ENCODE measurements at regions of chr1 and their contacts with region 1.

Region 1: GRCh38 chr1:65687428-65688214 is 105.1 kb upstream of the PDE4B start:
- DNase-seq: no peak
- H3K4me3 ChIP-seq: no peak overlapping the region
- CTCF ChIP-seq: peak; percentile 84

Region 2: GRCh38 chr1:65066766-65067490 is 620.7 kb before region 1 on chr1:
- CTCF ChIA-PET with region 1: interaction called, 22 read pairs
- POLR2A ChIA-PET with region 1: no interaction called
- DNase-seq: no peak
- H3K4me3 ChIP-seq: peak overlapping the region; percentile 68
- CTCF ChIP-seq: no peak

Region 3: DNA sequence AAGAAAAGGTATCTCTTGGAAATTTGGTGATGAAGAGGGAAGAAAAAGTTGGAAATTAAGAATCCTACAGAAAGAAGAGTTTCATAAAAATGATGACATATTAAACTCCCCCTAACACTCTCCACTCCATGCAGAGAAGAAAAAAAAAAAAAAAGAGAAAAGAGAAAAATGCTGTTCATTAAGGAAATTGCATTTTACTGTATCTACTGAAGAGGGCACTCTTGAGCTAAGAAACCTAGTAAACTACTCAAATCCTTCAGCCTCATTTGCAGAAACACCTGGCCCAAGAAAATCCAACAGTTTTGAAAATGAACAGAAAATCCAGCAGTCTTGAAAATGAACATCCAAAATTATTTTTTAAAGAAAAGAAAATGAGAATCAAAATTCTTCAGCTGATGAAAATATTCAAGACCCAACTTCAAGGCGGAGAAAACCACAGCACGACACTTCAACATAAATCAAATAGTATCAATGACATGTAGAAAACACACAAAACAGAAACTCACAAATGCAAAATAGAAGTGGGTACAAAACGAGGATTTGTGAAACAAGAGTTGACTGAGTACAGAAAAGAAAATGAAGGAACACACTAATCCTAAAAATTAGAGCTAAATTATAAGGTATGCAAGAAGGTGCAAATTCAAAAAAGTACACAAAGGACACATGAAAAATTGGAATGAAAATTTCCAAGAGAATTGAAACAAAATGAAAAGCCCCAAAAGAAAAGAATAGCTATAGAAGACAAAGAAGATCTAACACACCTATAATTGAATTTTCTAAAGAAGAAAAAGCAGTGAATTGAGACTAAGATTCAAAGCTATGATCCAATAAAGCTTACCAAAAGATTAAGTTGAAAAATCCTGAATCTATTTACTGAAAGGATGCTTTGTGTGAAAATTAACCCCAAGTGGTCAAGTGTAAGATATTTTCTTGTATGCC is 451.5 kb before region 1 on chr1:
- CTCF ChIA-PET with region 1: interaction called, 21 read pairs
- POLR2A ChIA-PET with region 1: no interaction called
- DNase-seq: no peak
- H3K4me3 ChIP-seq: no peak overlapping the region
- CTCF ChIP-seq: peak; percentile 26

Region 4: GRCh38 chr1:65440915-65441314 is 246.7 kb before region 1 on chr1:
- CTCF ChIA-PET with region 1: interaction called, 11 read pairs
- POLR2A ChIA-PET with region 1: no interaction called
- DNase-seq: no peak
- H3K4me3 ChIP-seq: no peak overlapping the region
- CTCF ChIP-seq: no peak

Region 5: GRCh38 chr1:65584399-65584798 is 103.2 kb before region 1 on chr1:
- CTCF ChIA-PET with region 1: no interaction called
- POLR2A ChIA-PET with region 1: no interaction called
- DNase-seq: no peak
- H3K4me3 ChIP-seq: no peak overlapping the region
- CTCF ChIP-seq: no peak

Region 6: GRCh38 chr1:65698590-65698989 is 11.0 kb after region 1 on chr1:
- CTCF ChIA-PET with region 1: interaction called, 33 read pairs
- POLR2A ChIA-PET with region 1: no interaction called
- DNase-seq: no peak
- H3K4me3 ChIP-seq: no peak overlapping the region
- CTCF ChIP-seq: no peak

Region 7: DNA sequence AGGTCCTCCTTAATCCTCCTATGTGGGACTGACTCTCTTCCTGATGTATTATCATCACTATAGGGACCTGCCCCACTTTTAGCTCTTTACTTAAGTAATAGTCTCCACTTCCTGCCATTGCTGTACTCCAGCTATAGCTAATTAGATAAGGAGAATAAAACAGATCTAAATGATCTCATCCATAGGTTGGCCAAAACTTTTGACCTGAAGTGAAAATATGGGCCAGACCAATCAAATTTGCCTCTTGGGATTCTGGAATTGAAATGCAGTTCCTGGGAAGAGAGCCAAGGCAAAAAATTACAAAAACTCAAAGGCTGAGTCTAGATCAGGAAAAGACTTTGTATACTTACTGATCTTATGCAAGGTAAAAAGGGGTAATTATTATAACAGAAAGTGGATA is 69.0 kb after region 1 on chr1:
- CTCF ChIA-PET with region 1: no interaction called
- POLR2A ChIA-PET with region 1: no interaction called
- DNase-seq: no peak
- H3K4me3 ChIP-seq: no peak overlapping the region
- CTCF ChIP-seq: no peak

Measured in AG04449 (cell line).